Activated T-helper 1 cell treated with anti-CD3 and anti-CD28 coated beads, Interleukin-12 subunit alpha, Interleukin-12 subunit beta, Interleukin-2, Interleukin-4 antibody, amounts not matched to agents 30 ng/mL and 10 ng/mL and 1 ng/mL, durations not matched to agents 14 hours and 24 hours and 36 hours (primary cell): ENCODE measurements at regions of chr7 and their contacts with region 1.

Region 1: GRCh38 chr7:18590744-18591340 is 95.3 kb downstream of the HDAC9 start:
- DNase-seq: no peak
- H3K4me3 Mint-ChIP-seq: no peak overlapping the region
- H3K27ac Mint-ChIP-seq: no peak overlapping the region
- H3K4me1 Mint-ChIP-seq: no peaks in the 10 kb centered on the region
- H3K27me3 Mint-ChIP-seq: no peaks in the 10 kb centered on the region

Region 2: GRCh38 chr7:18623389-18623788 is 32.5 kb after region 1 on chr7:
- intact Hi-C with region 1: no loop called
- DNase-seq: no peak
- H3K4me3 Mint-ChIP-seq: no peak overlapping the region
- H3K27ac Mint-ChIP-seq: no peak overlapping the region
- H3K4me1 Mint-ChIP-seq: no peaks in the 10 kb centered on the region
- H3K27me3 Mint-ChIP-seq: no peaks in the 10 kb centered on the region

Region 3: DNA sequence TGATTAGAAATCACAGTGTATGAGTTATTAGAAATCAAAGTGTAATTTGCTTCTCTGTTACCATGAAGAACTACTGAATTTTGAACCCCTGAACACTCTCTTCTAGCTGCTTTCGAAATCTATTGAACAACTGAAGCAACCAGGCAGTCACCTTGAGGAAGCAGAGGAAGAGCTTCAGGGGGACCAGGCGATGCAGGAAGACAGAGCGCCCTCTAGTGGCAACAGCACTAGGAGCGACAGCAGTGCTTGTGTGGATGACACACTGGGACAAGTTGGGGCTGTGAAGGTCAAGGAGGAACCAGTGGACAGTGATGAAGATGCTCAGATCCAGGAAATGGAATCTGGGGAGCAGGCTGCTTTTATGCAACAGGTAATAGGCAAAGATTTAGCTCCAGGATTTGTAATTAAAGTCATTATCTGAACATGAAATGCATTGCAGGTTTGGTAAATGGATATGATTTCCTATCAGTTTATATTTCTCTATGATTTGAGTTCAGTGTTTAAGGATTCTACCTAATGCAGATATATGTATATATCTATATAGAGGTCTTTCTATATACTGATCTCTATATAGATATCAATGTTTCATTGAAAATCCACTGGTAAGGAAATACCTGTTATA is 75.4 kb after region 1 on chr7:
- intact Hi-C with region 1: loop called (anchors 1 kb)
- DNase-seq: peak; percentile 46
- H3K4me3 Mint-ChIP-seq: no peak overlapping the region
- H3K27ac Mint-ChIP-seq: no peak overlapping the region
- H3K4me1 Mint-ChIP-seq: peaks cover 7% of the 10 kb centered on the region
- H3K27me3 Mint-ChIP-seq: no peaks in the 10 kb centered on the region

Region 4: DNA sequence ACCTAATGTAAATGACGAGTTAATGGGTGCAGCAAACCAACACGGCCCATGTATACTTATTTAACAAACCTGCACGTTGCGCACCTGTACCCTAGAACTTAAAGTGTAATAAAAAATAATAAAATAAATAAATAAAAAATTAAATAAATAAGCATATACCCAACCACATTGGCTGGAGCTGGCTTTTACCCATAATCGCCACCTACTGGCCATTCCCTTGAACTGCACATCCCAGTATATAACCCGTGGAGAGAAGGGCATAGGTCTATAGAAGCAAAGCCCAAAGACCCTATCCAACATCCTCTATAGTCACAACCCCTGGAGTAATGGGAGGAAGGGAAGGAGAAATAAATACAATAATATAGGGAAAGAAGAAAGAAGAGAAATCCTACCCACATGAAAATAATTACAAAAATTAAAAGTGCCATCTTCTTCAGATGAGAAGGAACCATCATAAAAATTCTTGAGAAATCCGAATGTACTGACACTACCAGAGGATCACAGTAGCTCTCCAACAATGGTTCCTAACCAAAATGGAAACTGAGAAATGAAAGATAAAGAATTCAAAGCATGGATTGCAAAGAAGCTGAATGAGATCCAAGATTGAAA is 461.0 kb after region 1 on chr7:
- intact Hi-C with region 1: loop called (anchors 5 kb)
- DNase-seq: no peak
- H3K4me3 Mint-ChIP-seq: no peak overlapping the region
- H3K27ac Mint-ChIP-seq: no peak overlapping the region
- H3K4me1 Mint-ChIP-seq: no peaks in the 10 kb centered on the region
- H3K27me3 Mint-ChIP-seq: no peaks in the 10 kb centered on the region

Region 5: DNA sequence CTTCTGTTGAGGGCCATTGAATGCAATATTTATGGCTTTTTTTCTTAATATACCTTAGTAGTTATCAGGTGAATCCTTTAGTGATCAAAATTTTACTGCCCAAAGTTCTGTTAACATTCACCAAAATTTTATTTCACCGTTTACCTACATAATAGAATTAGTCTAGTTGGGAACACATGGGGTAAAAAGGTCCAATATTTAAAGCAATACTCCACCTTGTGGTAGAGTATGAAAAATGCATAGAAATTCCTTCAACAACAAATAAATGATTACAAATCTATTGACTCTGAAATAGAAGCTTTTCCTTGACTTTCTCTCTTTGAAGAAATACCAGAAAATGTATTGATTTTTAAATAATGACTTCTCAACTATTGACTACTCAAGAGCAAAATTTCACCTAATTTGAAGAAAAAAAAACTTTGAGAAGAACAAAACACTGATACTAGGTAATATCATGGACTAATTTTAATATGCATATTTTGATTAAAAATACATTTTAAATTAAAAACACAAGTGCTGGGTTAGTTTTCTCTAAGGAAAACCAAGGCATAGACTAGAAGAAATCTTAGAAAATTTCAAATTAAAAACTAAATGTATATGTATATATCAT is 1074.7 kb after region 1 on chr7:
- intact Hi-C with region 1: loop called (anchors 1 kb)
- DNase-seq: no peak
- H3K4me3 Mint-ChIP-seq: no peak overlapping the region
- H3K27ac Mint-ChIP-seq: no peak overlapping the region
- H3K4me1 Mint-ChIP-seq: no peaks in the 10 kb centered on the region
- H3K27me3 Mint-ChIP-seq: peaks cover 5% of the 10 kb centered on the region